Activated T-helper 1 cell treated with anti-CD3 and anti-CD28 coated beads, Interleukin-12 subunit alpha, Interleukin-12 subunit beta, Interleukin-2, Interleukin-4 antibody, amounts not matched to agents 30 ng/mL and 10 ng/mL and 1 ng/mL, durations not matched to agents 14 hours and 24 hours and 36 hours (primary cell): ENCODE measurements at regions of chr2 and their contacts with region 1.

Region 1: GRCh38 chr2:241508240-241509154 is at the start of gene STK25:
- DNase-seq: peak; percentile 98
- H3K4me3 Mint-ChIP-seq: peak within 1 kb of the TSS; percentile 83
- H3K27ac Mint-ChIP-seq: peak within 1 kb of the TSS; percentile 81
- H3K4me1 Mint-ChIP-seq: peaks cover 8% of the 10 kb centered on the region
- H3K27me3 Mint-ChIP-seq: peaks cover 6% of the 10 kb centered on the region
- total RNA-seq, gene STK25: 125 and 133 TPM in 2 replicates

Region 2: GRCh38 chr2:241102239-241102803 is 406.2 kb before region 1 on chr2 and contains the start of gene MTERF4:
- intact Hi-C with region 1: loop called (anchors 2 kb)
- DNase-seq: peak; percentile 86
- H3K4me3 Mint-ChIP-seq: peak within 1 kb of the TSS; percentile 94
- H3K27ac Mint-ChIP-seq: peak within 1 kb of the TSS; percentile 98
- H3K4me1 Mint-ChIP-seq: peaks cover 41% of the 10 kb centered on the region
- H3K27me3 Mint-ChIP-seq: no peaks in the 10 kb centered on the region
- total RNA-seq, gene MTERF4: 40.5 and 43.3 TPM in 2 replicates

Region 3: DNA sequence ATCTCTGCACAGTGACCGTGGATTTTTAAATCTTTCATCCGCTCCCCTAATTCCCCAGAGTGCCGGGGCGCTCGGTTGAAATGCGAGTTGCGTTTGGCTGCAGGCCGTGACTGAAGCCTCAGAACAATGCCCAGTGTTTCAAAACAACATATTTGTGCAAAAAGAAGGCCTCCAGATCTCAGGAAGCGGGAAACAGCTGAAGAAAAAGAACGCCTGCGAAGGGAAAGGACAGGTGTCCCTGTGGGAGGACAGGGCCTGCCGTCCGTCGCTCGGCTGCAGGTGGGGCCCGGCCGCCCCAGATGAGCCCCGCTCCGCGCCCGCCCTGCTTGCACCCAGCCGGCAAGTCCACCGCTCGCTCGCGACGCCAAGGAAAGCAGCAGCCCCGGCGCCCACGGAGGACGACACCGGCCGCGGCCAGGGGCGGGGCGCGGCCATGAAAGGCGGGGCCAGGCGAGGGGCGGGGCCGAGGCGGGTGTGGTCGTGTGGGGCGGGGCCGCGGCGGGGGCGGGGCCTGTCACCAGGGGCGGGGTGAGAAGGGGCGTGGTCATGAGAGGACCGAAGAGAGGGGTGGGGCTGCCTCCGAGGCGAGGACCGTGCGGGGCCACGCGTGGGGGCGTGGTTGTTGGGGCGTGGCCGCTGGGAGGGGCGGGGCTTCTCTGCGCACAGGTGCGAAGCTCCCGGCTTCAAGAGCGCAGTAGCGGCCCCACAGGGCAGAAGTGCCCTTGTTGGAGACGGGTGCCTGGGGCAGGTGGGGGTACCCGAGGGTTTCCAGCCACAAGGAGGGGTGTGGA is 32.5 kb after region 1 on chr2:
- intact Hi-C with region 1: loop called (anchors 1 kb)
- DNase-seq: peak; percentile 59
- H3K4me3 Mint-ChIP-seq: peak overlapping the region; percentile 70
- H3K27ac Mint-ChIP-seq: no peak overlapping the region
- H3K4me1 Mint-ChIP-seq: no peaks in the 10 kb centered on the region
- H3K27me3 Mint-ChIP-seq: peaks cover 9% of the 10 kb centered on the region

Region 4: DNA sequence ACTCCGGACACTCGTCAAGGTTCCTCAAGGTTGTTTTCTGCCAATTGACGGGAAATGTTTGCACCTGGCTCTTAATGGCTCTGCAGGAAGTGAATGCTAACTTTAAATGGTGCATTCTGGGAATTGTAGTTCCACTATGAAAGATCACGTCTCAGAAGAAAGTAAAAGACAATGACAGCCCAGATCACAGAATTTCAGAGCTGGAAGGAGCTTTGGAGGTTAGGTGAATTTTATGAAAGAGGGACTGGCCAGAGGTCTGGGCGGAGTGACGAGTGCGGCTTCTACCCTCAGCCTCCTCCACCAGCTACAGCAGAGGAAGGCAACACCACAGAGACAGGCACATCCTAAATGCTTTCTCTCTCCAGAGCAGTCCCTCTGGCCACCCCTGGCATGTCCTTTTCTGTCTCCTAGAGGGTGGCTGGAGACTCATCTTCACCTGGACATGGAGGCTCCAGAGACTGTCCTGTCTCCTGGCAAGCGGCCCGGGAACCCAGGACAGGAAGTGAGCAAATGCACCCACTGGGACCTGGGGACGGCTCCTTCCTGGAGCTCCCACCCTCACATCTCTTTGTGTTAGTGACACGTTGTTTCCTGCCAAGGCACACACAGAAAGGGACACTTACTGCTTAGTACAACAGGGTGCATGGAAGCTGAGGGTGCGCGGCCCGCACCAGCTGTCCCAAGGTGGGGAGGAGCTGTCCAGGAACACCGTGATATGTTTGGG is 109.1 kb after region 1 on chr2:
- intact Hi-C with region 1: loop called (anchors 1 kb)
- DNase-seq: peak; percentile 31
- H3K4me3 Mint-ChIP-seq: peak overlapping the region; percentile 85
- H3K27ac Mint-ChIP-seq: peak overlapping the region; percentile 88
- H3K4me1 Mint-ChIP-seq: peaks cover 36% of the 10 kb centered on the region
- H3K27me3 Mint-ChIP-seq: no peaks in the 10 kb centered on the region

Region 5: DNA sequence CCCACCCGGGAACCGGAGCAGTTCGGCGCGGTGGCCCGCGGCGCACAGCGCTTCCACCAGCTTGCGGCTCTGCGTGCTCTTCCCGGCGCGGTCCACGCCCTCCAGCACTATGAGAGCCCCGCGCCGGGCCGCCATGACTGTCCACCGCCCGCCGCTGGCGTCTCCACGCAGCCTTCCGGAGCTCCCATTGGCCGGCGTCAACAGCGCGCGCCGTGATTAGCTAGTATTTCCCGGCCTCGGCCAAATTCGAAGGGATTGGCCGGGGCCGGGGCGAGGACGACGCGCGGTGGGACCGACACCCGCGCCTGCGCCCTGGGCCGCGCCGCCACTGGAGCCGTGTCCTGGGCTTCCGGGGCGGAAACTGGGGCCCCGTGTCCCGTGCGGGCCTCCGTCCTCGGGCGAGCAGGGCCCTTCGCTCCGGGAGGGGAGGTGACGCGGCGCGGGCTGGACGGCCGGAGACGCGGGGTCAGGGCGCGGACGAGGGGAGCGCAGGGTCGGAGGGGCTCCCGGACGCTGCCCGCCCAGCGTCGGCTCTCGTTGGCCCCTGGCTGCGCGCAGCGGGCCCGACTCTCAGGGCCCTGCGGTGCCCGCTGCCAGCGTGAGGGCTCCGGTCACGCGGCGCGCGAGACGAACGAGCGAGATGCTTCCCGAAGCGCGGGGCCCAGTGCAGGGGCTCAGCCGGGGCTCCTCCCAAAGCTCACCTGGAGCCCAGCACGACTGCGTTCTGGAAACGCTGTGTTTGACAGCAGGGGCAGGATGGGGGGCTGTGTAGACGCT is 178.3 kb after region 1 on chr2 and contains the start of gene DTYMK:
- intact Hi-C with region 1: loop called (anchors 1 kb)
- DNase-seq: peak; percentile 97
- H3K4me3 Mint-ChIP-seq: peak within 1 kb of the TSS; percentile 96
- H3K27ac Mint-ChIP-seq: peak within 1 kb of the TSS; percentile 98
- H3K4me1 Mint-ChIP-seq: peaks cover 28% of the 10 kb centered on the region
- H3K27me3 Mint-ChIP-seq: no peaks in the 10 kb centered on the region
- total RNA-seq, gene DTYMK: 102 and 106 TPM in 2 replicates

Region 6: DNA sequence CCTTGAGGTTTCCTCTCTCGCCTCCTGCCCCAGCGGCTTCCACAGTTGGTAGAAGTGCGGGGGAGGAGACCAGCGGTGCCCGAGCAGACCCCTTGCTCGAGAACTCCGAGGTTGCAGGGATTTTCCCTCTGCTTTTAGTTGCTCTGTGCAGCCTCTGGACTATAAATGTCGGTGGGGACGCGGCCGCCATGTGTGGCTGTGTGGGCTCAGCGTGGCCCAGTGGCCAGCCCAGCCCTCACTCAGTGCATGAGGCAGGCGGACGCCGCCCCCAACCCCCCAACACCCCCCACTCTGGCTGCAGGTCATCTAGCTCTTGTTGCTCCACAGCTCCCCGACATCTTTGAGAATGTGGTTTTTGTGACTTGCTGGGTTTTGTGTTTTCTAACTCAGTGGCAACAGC is 210.6 kb after region 1 on chr2:
- intact Hi-C with region 1: no loop called
- DNase-seq: no peak
- H3K4me3 Mint-ChIP-seq: no peak overlapping the region
- H3K27ac Mint-ChIP-seq: no peak overlapping the region
- H3K4me1 Mint-ChIP-seq: no peaks in the 10 kb centered on the region
- H3K27me3 Mint-ChIP-seq: no peaks in the 10 kb centered on the region

Region 7: GRCh38 chr2:241892299-241893137 is 384.0 kb after region 1 on chr2:
- intact Hi-C with region 1: no loop called
- DNase-seq: no peak
- H3K4me3 Mint-ChIP-seq: no peak overlapping the region
- H3K27ac Mint-ChIP-seq: no peak overlapping the region
- H3K4me1 Mint-ChIP-seq: peaks cover 4% of the 10 kb centered on the region
- H3K27me3 Mint-ChIP-seq: peaks cover 2% of the 10 kb centered on the region